ENCODE measurements at regions of chr12 and their contacts with region 1.

Region 1: DNA sequence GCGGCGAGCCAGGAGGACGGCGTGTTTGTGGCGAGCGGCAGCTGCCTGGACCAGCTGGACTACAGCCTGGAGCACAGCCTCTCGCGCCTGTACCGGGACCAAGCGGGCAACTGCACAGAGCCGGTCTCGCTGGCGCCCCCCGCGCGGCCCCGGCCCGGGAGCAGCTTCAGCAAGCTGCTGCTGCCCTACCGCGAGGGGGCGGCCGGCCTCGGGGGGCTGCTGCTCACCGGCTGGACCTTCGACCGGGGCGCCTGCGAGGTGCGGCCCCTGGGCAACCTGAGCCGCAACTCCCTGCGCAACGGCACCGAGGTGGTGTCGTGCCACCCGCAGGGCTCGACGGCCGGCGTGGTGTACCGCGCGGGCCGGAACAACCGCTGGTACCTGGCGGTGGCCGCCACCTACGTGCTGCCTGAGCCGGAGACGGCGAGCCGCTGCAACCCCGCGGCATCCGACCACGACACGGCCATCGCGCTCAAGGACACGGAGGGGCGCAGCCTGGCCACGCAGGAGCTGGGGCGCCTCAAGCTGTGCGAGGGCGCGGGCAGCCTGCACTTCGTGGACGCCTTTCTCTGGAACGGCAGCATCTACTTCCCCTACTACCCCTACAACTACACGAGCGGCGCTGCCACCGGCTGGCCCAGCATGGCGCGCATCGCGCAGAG is 873 bp downstream of the PLXNC1 start:
- DNase-seq: peak; percentile 82
- ATAC-seq: peak; percentile 28
- H3K4me3 Mint-ChIP-seq: peak overlapping the region; percentile 99
- H3K27ac Mint-ChIP-seq: peak overlapping the region; percentile 71
- H3K4me1 Mint-ChIP-seq: peaks cover 38% of the 10 kb centered on the region
- H3K27me3 Mint-ChIP-seq: peaks cover 14% of the 10 kb centered on the region

Region 2: GRCh38 chr12:94207849-94208621 is 58.8 kb after region 1 on chr12:
- POLR2A ChIA-PET with region 1: interaction called, 11 read pairs
- DNase-seq: peak; percentile 41
- ATAC-seq: peak; percentile 71
- H3K4me3 Mint-ChIP-seq: peak overlapping the region; percentile 87
- H3K27ac Mint-ChIP-seq: peak overlapping the region; percentile 90
- H3K4me1 Mint-ChIP-seq: peaks cover 52% of the 10 kb centered on the region
- H3K27me3 Mint-ChIP-seq: no peaks in the 10 kb centered on the region

Region 3: DNA sequence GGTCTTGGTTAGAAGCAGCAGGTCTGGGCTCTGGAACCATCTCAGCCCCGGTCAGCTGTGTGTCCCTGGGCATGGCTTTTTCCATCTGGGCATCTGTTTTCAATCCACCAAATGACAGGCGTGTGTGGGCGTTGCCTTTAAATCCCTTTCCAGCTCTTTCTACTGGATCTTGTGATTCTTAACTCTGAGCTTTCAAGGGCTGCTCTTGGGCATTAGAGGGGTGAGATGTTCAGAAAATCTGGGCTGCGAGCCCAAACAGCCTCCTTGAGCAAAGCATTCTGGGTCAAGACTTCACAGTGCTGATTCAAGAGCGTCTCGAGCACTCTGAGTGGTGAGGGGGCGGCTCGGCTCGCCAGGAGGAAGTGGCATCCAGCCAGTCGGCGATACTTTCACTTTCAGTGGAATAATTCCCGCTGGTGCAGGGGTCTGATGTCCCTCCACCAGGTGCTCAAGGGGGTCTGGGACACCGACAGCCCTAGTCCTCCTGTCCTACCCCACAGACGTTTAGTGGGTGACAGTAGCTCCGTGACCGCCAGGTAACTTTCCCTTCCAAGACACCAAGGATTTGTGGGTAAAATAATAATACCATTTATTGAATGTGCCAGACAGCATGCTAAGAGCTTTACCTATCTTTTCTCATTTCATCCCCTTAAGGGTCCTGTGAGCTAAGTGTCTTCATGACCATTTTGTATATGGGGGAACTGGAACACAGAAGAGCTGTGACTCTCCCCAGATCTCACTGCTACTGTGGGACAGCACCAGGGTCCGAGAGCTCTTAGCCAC is 113.2 kb after region 1 on chr12:
- POLR2A ChIA-PET with region 1: interaction called, 13 read pairs
- DNase-seq: peak; percentile 76
- ATAC-seq: peak; percentile 88
- H3K4me3 Mint-ChIP-seq: peak overlapping the region; percentile 90
- H3K27ac Mint-ChIP-seq: peak overlapping the region; percentile 96
- H3K4me1 Mint-ChIP-seq: peaks cover 39% of the 10 kb centered on the region
- H3K27me3 Mint-ChIP-seq: no peaks in the 10 kb centered on the region

Region 4: GRCh38 chr12:94535510-94535921 is 386.3 kb after region 1 on chr12:
- POLR2A ChIA-PET with region 1: interaction called, 13 read pairs
- DNase-seq: no peak
- ATAC-seq: no peak
- H3K4me3 Mint-ChIP-seq: peak overlapping the region; percentile 13
- H3K27ac Mint-ChIP-seq: peak overlapping the region; percentile 54
- H3K4me1 Mint-ChIP-seq: peaks cover 34% of the 10 kb centered on the region
- H3K27me3 Mint-ChIP-seq: peaks cover 2% of the 10 kb centered on the region